ENCODE measurements at regions of chr17 and their contacts with region 1.

Region 1: DNA sequence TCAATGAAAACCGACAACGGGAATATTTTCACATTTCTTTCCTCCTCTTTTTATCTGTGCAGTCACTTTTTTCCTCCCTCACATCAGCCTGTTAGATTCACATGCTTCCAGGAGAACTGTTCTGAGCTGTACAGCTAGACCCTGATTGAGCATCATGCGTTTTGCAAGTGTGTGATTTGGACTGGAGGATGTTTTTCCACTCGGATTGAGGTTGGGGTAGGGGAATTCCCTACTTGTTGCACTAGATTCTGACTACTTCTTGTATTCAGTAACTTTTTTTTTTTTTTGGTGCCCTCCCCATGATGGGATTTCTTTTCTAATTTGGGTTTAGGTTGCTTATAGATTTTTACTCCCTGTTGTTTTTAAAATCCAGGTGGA is 4.8 kb downstream of the MSI2 start:
- DNase-seq: no peak
- H3K4me3 ChIP-seq: no peak overlapping the region
- H3K27ac ChIP-seq: no peak overlapping the region
- H3K4me1 ChIP-seq: peaks cover 22 to 31% of the 10 kb centered on the region in 2 donors
- H3K27me3 ChIP-seq: no peaks in the 10 kb centered on the region
- CTCF ChIP-seq: no peak
- POLR2A ChIP-seq: no peak

Region 2: DNA sequence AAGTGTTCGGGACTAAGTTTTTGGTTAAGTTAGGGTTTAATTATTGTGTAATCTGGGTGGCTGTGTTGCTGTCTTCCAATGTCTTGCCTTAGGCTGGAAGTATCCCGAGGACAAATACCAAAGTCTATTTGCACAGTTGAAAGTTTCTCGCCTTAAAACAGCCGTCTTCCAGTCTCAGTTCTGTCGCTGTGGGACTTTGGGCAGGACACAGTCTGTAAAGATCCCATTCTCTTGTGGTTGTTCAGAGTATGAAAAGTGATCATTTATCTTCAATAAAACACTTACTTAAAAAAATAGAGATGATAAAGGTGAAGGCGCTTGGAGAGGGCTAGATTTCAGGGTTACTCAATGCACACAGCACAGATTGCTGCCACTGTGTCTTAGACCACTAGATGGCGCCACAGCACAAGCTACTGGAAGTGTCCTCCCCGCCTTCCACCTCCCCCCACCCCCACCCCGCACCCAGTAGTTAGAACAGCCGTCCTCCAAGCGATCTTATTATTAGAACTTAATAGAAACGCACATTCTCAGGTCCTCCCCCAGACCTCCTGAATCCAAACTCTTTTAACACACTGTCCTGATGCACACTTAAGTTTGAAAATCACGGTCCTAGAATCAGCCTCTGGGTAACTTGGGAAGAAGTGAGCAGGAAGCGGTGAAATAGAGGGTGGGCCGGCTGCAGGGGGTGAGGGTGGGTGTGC is 130.2 kb before region 1 on chr17:
- intact Hi-C with region 1: no loop called
- DNase-seq: peak; percentile 84 to 87
- H3K4me3 ChIP-seq: no peak overlapping the region
- H3K27ac ChIP-seq: no peak overlapping the region
- H3K4me1 ChIP-seq: no peaks in the 10 kb centered on the region
- H3K27me3 ChIP-seq: no peaks in the 10 kb centered on the region
- CTCF ChIP-seq: peak; percentile 64 to 91 (median 68)
- POLR2A ChIP-seq: no peak

Region 3: DNA sequence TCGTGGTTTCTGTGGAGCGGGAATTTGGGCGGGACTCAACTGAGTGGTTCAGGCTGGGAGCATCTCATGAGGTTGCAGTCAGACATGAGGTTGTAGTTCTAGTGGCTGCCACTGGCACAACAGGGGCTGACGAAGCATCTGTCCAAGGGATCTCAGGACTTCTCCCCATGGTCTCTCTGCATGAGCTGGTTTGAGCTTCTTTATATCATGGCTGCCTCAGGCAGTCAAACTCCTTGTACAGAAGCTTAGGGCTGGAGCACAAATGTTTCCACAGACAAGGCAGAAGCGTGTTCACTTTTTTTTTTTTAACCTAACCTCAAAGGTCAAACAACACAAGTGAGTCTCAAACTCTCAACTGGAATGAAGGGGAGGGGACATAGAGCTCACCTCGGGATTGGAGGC is 238.6 kb after region 1 on chr17:
- intact Hi-C with region 1: loop called (anchors 10 kb)
- DNase-seq: peak in 1 of 2 donors; percentile 55
- H3K4me3 ChIP-seq: no peak overlapping the region
- H3K27ac ChIP-seq: no peak overlapping the region
- H3K4me1 ChIP-seq: peaks cover 15 to 31% of the 10 kb centered on the region in 2 donors
- H3K27me3 ChIP-seq: no peaks in the 10 kb centered on the region
- CTCF ChIP-seq: peak in 3 of 6 experiments; percentile 4 to 26 (median 16)
- POLR2A ChIP-seq: no peak

Measured in thyroid gland (tissue), 4 donors.